Testis (tissue), 5 donors: ENCODE measurements at regions of chr12 and their contacts with region 1.

Region 1: DNA sequence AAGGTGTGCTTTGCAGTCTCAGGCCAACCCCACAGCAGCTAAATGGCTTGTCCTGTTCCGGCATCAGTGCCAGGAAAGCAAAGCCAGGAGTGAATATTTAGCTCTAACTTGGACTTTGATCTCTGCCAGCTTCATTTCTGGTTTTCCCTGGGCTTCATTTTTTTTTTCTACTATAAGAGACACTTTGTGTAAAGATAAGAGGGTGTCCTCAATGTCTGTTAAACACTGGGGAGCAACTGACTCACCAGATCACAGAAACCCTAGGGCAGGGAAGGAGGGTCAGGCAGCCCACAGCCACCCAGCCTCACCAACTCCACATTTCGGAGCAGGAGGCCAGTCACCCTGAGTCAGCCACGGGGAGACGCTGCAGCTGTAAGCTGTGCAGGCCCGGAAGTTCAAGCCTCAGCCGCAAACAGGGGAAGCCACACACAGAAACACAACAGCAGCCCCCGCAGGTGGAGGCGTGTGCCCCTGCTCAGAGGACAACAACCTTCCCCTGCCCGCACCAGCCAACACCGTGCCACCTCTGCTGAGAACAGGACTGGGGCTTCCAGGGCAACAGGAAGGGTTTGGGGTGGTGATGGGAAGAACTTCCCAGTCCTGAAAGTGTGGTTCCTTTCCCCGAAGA is 6.3 kb downstream of the TNFRSF1A start:
- DNase-seq: peak; percentile 82
- H3K4me3 ChIP-seq: no peak overlapping the region
- H3K27ac ChIP-seq: peak overlapping the region; percentile 86 to 93
- H3K4me1 ChIP-seq: peaks cover 50% of the 10 kb centered on the region
- H3K27me3 ChIP-seq: no peaks in the 10 kb centered on the region
- CTCF ChIP-seq: peak; percentile 19 to 44 (median 29)
- POLR2A ChIP-seq: no peak

Region 2: GRCh38 chr12:6383572-6384498 is 48.3 kb after region 1 on chr12 and contains the start of gene LTBR:
- intact Hi-C with region 1: loop called (anchors 10 kb)
- DNase-seq: peak; percentile 92
- H3K4me3 ChIP-seq: peak within 1 kb of the TSS; percentile 68 to 70
- H3K27ac ChIP-seq: peak within 1 kb of the TSS; percentile 85 to 94
- H3K4me1 ChIP-seq: peaks cover 18% of the 10 kb centered on the region
- H3K27me3 ChIP-seq: no peaks in the 10 kb centered on the region
- CTCF ChIP-seq: peak in 1 of 3 experiments; percentile 1
- POLR2A ChIP-seq: no peak
- total RNA-seq, gene LTBR: 81.3 to 112 TPM

Region 3: DNA sequence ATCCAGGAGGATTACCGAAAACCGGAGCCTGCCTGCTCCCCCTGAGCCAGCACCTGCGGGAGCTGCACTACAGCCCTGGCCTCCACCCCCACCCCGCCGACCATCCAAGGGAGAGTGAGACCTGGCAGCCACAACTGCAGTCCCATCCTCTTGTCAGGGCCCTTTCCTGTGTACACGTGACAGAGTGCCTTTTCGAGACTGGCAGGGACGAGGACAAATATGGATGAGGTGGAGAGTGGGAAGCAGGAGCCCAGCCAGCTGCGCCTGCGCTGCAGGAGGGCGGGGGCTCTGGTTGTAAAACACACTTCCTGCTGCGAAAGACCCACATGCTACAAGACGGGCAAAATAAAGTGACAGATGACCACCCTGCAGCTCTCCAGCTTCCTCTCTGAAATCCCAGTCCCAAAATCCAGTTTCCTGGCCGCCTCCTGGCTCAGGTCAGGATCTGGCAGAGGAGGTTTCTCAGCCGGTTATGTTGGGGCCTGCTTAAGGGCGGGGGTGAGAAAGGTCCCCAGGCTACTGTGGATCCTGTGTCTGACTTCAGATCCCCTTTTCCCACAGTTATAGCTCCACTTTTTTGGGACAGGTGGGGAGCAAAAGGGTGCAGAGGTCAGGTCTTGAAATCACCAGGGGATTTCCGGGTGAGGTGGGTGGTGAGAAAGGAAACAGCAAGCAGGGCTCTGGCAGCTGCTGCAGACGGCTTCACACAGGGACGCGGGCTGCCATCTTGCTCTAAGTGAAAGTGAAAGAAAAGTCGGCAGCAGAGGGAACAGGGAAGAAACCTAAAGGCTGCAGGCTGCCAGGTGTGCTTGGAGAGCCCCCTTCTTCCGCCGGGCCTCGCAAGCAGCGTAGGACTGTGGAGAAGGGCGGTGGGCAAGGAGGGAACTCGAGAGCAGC is 116.0 kb after region 1 on chr12 and contains the start of gene TAPBPL:
- intact Hi-C with region 1: loop called (anchors 10 kb)
- DNase-seq: peak; percentile 93
- H3K4me3 ChIP-seq: peak within 1 kb of the TSS; percentile 63 to 77
- H3K27ac ChIP-seq: peak within 1 kb of the TSS; percentile 94 to 97
- H3K4me1 ChIP-seq: peaks cover 22% of the 10 kb centered on the region
- H3K27me3 ChIP-seq: no peaks in the 10 kb centered on the region
- CTCF ChIP-seq: no peak
- POLR2A ChIP-seq: peak; percentile 40
- total RNA-seq, gene TAPBPL: 18.4 to 29.8 TPM